Pancreas (tissue), 10 donors: ENCODE measurements at regions of chr4 and their contacts with region 1.

Region 1: DNA sequence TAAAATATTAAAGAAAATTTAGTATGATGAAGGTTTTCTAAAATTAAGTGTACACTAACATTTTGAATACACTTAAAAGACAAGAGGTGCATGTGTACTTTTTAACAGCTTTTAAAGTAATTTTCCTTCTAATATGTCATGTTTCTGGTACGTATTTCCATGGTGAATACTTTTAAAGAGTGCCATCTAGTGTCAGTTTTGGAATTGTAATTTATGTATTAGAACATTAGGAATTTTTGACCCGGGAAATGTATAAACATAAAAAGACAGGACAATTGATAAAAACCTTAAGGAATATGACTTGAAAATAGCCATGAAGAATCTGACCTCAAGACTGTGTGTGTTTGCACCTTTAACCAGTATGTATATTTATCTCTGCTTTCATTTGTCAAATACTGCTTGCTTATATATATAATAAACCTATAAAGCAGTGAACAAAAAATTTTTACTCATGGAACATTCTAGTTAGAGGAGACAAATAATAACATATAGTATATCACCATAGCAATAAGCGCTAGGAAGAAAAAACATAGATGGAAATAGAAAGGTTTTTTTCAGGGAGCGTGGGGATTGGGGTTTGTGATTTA is 7.2 kb downstream of the GSTCD start:
- DNase-seq: no peak
- ATAC-seq: peak; percentile 56 to 74 (median 70)
- H3K4me3 ChIP-seq: no peak overlapping the region
- H3K27ac ChIP-seq: no peak overlapping the region
- H3K4me1 ChIP-seq: peaks cover 0 to 10% (median 0%) of the 10 kb centered on the region in 3 donors
- H3K27me3 ChIP-seq: no peaks in the 10 kb centered on the region
- CTCF ChIP-seq: peak; percentile 17 to 47 (median 32)

Region 2: DNA sequence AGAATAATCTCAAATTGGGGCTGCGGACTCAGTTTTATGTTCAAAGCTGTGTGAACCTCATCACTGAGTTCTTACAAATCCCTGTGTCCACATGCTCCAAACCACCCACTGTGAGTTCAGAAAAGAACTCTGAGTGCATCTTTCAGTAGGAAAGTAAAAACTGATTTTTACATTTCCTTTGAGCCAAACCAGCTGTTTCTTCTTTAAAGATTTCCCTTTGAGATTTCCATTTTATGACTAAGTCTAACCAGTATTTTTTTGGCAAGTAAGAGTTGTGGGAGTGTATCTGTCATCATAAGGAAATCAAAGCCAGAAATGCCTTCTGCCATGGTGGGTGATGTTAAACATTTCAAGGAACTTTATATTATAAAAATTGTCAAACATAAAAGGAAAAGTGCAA is 469.1 kb before region 1 on chr4:
- intact Hi-C with region 1: no loop called
- DNase-seq: no peak
- ATAC-seq: peak in 3 of 4 donors; percentile 24 to 45 (median 42)
- H3K4me3 ChIP-seq: no peak overlapping the region
- H3K27ac ChIP-seq: no peak overlapping the region
- H3K4me1 ChIP-seq: no peaks in the 10 kb centered on the region
- H3K27me3 ChIP-seq: no peaks in the 10 kb centered on the region
- CTCF ChIP-seq: no peak

Region 3: GRCh38 chr4:105509714-105510113 is 206.1 kb before region 1 on chr4:
- intact Hi-C with region 1: loop called in 1 of 3 experiments (anchors 10 kb)
- DNase-seq: no peak
- ATAC-seq: no peak
- H3K4me3 ChIP-seq: no peak overlapping the region
- H3K27ac ChIP-seq: no peak overlapping the region
- H3K4me1 ChIP-seq: no peaks in the 10 kb centered on the region
- H3K27me3 ChIP-seq: no peaks in the 10 kb centered on the region
- CTCF ChIP-seq: no peak